GM18951 (cell line): ENCODE measurements at regions of chr4 and their contacts with region 1.

Region 1: DNA sequence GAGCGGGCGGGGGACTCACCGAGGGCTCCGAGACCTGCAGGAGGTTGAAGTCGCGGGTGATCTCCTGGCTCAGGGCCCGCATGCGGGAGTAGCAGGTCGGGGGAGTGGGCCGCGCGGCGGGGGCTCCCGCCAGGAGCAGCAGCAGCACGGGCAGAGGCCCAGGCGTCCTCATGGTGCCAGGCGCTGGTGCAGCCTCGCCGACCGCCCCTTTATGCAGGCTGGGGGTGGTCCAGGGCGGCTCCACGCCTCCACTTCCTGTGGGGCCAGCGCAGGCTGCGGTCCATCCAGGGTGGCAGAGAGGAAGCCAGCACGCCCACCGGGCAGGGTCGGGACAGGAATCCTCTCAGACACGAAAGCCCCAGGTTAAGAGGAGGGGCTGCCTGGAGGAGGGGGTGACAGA is at the start of gene CYTL1:
- POLR2A ChIP-seq: no peak

Region 2: GRCh38 chr4:4651811-4652755 is 367.2 kb before region 1 on chr4:
- in situ Hi-C with region 1: no loop called
- POLR2A ChIP-seq: no peak

Region 3: GRCh38 chr4:5812506-5813229 is 793.4 kb after region 1 on chr4:
- in situ Hi-C with region 1: loop called (anchors 25 kb)
- POLR2A ChIP-seq: no peak